K562 (cell line): ENCODE measurements at regions of chr1 and their contacts with region 1.

Region 1: GRCh38 chr1:174217787-174218574 is 58.7 kb downstream of the RABGAP1L start:
- DNase-seq: peak in 2 of 4 experiments; percentile 31 to 59
- ATAC-seq: peak; percentile 90
- H3K4me3 ChIP-seq: no peak overlapping the region
- H3K27ac ChIP-seq: no peak overlapping the region
- H3K4me1 ChIP-seq: peaks cover 0 to 3% of the 10 kb centered on the region in 2 experiments; a peak in 2 of 5 replicates
- H3K27me3 ChIP-seq: no peaks in the 10 kb centered on the region
- CTCF ChIP-seq: peak; percentile 58 to 95 (median 70)
- EP300 ChIP-seq: no peak
- POLR2A ChIP-seq: no peak
- RAD21 ChIP-seq: peak; percentile 89 to 93

Region 2: GRCh38 chr1:174142836-174143235 is 75.1 kb before region 1 on chr1:
- CTCF ChIA-PET with region 1: no interaction called
- POLR2A ChIA-PET with region 1: interaction called, 3 read pairs
- in situ Hi-C with region 1: no loop called
- intact Hi-C with region 1: loop called (anchors 1 kb)
- DNase-seq: no peak
- ATAC-seq: no peak
- H3K4me3 ChIP-seq: no peak overlapping the region
- H3K27ac ChIP-seq: no peak overlapping the region
- H3K4me1 ChIP-seq: no peaks in the 10 kb centered on the region; a peak in 1 of 5 replicates
- H3K27me3 ChIP-seq: peaks cover 0 to 4% of the 10 kb centered on the region in 2 experiments; a peak in 2 of 5 replicates
- CTCF ChIP-seq: no peak
- EP300 ChIP-seq: no peak
- POLR2A ChIP-seq: no peak
- RAD21 ChIP-seq: no peak

Region 3: DNA sequence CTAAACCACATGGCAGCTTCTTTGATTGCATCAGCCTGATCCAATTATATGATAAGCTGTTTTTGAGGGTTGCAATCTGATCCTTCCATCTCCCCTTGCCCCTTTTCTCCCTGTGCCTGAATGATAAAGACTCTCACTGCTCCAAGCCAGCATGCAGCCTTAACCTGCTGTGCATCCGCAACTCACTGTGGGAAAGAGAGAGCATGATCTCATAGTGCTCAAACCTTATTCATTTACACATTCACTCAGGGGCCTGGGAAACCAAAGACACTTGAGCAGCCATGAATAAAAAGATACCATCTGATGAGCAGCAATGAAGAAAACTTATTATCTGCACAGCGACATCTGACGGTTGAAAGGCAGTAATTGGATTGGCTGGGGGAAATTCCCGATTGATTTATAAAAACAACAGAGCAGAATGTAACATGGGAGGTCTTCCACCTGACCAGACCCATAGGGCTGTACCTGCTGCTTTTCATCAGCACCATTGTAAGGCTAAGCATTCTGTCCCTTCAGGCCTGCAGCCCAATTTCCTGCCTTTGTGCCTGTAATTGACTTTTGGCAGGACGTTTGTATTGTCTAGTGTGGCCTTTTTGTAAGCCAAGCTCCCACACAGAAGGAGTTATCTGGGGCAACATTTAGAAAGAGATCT is 912.1 kb after region 1 on chr1:
- CTCF ChIA-PET with region 1: no interaction called
- POLR2A ChIA-PET with region 1: no interaction called
- in situ Hi-C with region 1: no loop called
- intact Hi-C with region 1: no loop called
- DNase-seq: peak in 2 of 4 experiments; percentile 22 to 23
- ATAC-seq: no peak; the same call in 2 of the 3 replicates
- H3K4me3 ChIP-seq: no peak overlapping the region
- H3K27ac ChIP-seq: no peak overlapping the region
- H3K4me1 ChIP-seq: no peaks in the 10 kb centered on the region; a peak in 2 of 5 replicates
- H3K27me3 ChIP-seq: peaks cover 12 to 24% of the 10 kb centered on the region in 2 experiments
- CTCF ChIP-seq: peak in 2 of 3 experiments; percentile 16 to 28; a peak in 2 of 6 replicates
- EP300 ChIP-seq: no peak
- POLR2A ChIP-seq: no peak
- RAD21 ChIP-seq: no peak